ENCODE measurements at regions of chr16 and their contacts with region 1.

Region 1: DNA sequence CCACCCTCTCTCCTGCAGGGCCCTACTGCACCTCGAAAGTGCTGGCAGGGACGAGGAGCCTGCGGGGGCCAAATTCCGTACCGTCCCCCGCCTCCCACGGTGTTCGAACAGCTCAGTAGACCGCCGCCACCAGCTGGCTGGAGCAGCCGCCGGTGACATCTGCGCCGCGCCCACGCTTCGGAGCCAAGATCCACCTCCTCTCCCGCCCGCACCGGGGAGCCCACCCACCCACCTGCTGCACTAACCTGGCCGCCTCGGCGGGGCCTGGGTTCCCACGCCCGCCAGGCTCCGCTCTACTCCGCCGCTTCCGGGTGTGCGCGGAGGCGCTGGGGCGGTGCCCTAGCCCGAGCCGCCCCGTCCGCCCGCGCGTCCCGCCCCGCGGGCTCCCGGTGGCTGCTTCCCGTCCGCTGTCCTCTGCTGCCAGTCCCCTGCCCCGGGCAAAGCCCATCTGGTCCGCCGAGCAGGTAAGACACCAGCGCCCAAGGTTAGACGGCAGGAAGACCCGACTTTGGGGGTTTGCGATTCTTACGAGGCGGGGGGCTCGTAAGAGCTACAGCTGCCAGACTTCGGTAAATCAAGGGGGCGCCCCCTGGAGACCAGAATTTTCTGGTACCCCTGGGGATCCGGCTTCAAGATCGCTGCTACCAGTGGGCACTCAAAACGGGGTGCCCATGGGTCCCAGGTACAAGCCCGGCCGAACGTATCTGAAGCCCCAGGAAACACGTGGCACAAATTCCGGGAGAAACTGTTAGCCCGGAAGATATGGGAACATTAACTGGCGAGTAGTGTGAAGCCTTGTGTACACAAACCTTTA is at the starts of genes FBXL8 and TRADD:
- DNase-seq: peak; percentile 84
- ATAC-seq: peak; percentile 65
- H3K4me3 Mint-ChIP-seq: peak within 1 kb of the TSS; percentile 94
- H3K27ac Mint-ChIP-seq: peak within 1 kb of the TSS; percentile 94
- H3K4me1 Mint-ChIP-seq: peaks cover 60% of the 10 kb centered on the region
- H3K27me3 Mint-ChIP-seq: peaks cover 18% of the 10 kb centered on the region
- CTCF ChIP-seq: no peak
- total RNA-seq, gene FBXL8: 5.6 and 6.5 TPM in 2 replicates
- total RNA-seq, gene TRADD: 31.5 and 37.3 TPM in 2 replicates

Region 2: DNA sequence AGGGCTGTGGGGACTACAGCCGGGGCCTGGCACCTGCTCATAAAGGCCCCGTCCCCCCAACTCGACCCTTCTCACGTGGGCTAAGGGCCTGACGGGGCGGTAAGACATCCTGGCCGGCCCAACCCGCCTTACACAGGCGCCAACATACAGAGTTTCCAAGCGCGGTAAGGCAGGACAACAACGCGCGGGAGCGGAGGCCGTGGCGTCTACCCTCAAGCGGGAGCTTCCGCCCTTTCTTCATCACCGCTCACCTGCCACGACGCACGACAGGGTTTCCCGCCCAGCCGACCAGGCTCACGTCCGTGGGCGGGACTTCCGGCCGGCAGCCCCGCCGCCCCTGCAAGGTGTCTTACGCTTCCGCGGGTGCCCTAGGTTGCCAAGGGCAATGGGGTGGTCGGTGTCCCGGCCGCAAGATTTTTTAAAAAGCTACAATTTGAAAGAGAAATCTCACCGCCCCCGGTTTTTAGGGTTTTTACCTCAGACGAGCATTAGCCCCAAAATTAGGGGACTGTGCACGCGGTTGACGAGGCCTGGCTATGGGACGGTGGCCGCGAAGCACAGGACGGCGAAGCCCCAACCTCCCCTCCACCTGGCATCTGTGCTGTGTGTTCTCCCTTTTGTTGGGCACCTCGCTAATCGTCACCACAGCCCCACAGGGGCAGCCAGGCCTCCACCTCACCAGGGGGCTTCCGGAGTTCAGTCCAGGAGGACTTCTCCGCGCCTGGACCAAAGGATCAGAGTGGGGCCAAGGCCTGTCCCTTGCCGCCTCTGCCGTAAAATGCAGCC is 358.3 kb before region 1 on chr16 and contains the start of gene TERB1:
- CTCF ChIA-PET with region 1: no interaction called
- POLR2A ChIA-PET with region 1: no interaction called
- intact Hi-C with region 1: no loop called
- DNase-seq: no peak
- ATAC-seq: no peak
- H3K4me3 Mint-ChIP-seq: no peak within 1 kb of the TSS
- H3K27ac Mint-ChIP-seq: no peak within 1 kb of the TSS
- H3K4me1 Mint-ChIP-seq: no peaks in the 10 kb centered on the region
- H3K27me3 Mint-ChIP-seq: no peaks in the 10 kb centered on the region
- CTCF ChIP-seq: no peak
- total RNA-seq, gene TERB1: 0.27 TPM in 1 of 2 replicates, not detected in the other

Region 3: DNA sequence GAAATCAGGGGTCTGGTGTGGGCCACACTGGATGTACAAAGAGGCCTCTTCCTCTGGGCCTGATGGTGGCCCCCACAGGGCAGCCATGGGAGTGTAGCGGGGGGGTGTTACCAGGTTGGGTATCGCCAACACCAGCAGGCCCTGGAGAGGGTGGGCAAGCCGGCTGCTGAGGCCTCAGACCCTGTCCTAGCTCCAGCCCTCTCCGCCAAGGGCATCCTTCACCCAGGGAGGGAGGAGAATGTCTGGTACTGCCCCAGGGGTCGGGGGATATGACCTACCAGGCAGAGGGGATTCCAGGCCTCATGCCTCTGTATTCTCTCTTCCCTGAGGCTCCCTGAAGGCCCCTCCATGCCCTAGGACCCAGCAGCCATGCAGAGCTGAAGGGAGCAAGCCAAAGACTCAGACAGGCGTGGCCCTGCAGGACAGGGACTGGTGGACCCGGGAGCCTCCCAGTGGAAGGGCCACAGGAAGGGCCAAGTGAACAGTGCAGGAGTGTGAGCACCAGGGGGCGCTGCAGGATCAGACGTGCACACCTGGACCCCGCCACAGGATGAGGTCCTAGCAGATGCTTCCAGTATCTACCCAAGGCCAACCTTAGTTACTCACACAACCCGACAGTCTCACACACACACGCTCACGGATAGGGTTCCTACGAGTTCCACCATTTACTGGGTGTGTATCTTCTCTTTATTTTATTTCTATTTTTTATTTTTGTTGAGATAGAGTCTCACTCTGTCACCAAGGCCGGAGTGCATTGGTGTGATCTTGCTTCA is 182.3 kb before region 1 on chr16:
- CTCF ChIA-PET with region 1: interaction called, 13 read pairs
- POLR2A ChIA-PET with region 1: interaction called, 4 read pairs
- intact Hi-C with region 1: loop called (anchors 1 kb)
- DNase-seq: peak; percentile 83
- ATAC-seq: peak; percentile 99
- H3K4me3 Mint-ChIP-seq: no peak overlapping the region
- H3K27ac Mint-ChIP-seq: no peak overlapping the region
- H3K4me1 Mint-ChIP-seq: no peaks in the 10 kb centered on the region
- H3K27me3 Mint-ChIP-seq: peaks cover 6% of the 10 kb centered on the region
- CTCF ChIP-seq: peak; percentile 51

Region 4: GRCh38 chr16:67109407-67110135 is 50.2 kb before region 1 on chr16 and contains the start of gene PHAF1:
- CTCF ChIA-PET with region 1: interaction called, 7 read pairs
- POLR2A ChIA-PET with region 1: interaction called, 3 read pairs
- intact Hi-C with region 1: loop called (anchors 2 kb)
- DNase-seq: peak; percentile 96
- ATAC-seq: peak; percentile 92
- H3K4me3 Mint-ChIP-seq: peak within 1 kb of the TSS; percentile 91
- H3K27ac Mint-ChIP-seq: peak within 1 kb of the TSS; percentile 83
- H3K4me1 Mint-ChIP-seq: peaks cover 39% of the 10 kb centered on the region
- H3K27me3 Mint-ChIP-seq: no peaks in the 10 kb centered on the region
- CTCF ChIP-seq: no peak
- total RNA-seq, gene PHAF1: 13.8 and 16.9 TPM in 2 replicates

Region 5: GRCh38 chr16:67191995-67192681 is 32.3 kb after region 1 on chr16 and contains the start of gene E2F4:
- CTCF ChIA-PET with region 1: interaction called, 4 read pairs
- POLR2A ChIA-PET with region 1: interaction called, 4 read pairs
- intact Hi-C with region 1: loop called (anchors 2 kb)
- DNase-seq: peak; percentile 85
- ATAC-seq: peak; percentile 98
- H3K4me3 Mint-ChIP-seq: peak within 1 kb of the TSS; percentile 87
- H3K27ac Mint-ChIP-seq: peak within 1 kb of the TSS; percentile 70
- H3K4me1 Mint-ChIP-seq: peaks cover 32% of the 10 kb centered on the region
- H3K27me3 Mint-ChIP-seq: peaks cover 3% of the 10 kb centered on the region
- CTCF ChIP-seq: no peak
- total RNA-seq, gene E2F4: 117 and 128 TPM in 2 replicates

Region 6: DNA sequence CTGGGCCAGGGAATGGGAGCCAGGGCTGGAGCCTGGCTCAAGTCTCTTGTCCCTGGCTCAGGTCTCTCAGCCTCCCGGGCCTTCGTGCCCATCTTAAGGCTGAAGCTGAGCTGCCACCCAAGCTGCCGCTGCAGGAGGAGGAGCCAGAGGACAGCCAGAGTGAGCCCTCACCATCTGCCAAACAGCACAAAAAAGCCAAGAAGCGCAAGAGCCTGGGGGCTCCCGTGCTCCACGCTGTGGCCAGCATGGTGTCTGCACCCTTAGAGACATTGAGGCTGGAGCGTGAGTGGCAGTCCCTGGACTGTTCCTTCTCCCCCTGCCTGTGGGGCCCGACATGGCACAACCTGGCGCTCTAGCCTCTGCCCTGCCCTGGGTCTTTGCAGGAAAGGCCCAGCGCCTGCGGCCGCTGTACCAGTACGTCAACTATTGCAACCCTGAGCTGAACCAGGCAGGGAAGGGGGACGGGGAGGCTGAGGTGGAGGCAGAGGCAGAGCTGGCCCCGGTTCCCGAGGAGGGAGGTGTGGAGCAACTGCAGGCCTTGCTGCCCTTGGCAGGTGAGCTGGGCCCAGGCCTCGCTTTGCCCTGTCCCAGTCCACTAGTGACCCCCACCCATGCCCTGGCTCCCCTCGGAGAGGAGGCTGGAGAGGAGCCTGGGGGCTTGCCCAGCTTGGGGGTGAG is 508.2 kb after region 1 on chr16:
- CTCF ChIA-PET with region 1: no interaction called
- POLR2A ChIA-PET with region 1: no interaction called
- intact Hi-C with region 1: loop called (anchors 10 kb)
- DNase-seq: peak; percentile 66
- ATAC-seq: peak; percentile 84
- H3K4me3 Mint-ChIP-seq: peak overlapping the region; percentile 87
- H3K27ac Mint-ChIP-seq: peak overlapping the region; percentile 85
- H3K4me1 Mint-ChIP-seq: peaks cover 49% of the 10 kb centered on the region
- H3K27me3 Mint-ChIP-seq: no peaks in the 10 kb centered on the region
- CTCF ChIP-seq: no peak